ENCODE measurements at regions of chr6 and their contacts with region 1.

Region 1: GRCh38 chr6:167219967-167220512 is 62.3 kb upstream of the GPR31 start:
- DNase-seq: peak; percentile 74

Region 2: GRCh38 chr6:167285077-167285770 is 65.2 kb after region 1 on chr6:
- intact Hi-C with region 1: loop called (anchors 10 kb)
- DNase-seq: no peak

Region 3: GRCh38 chr6:167760979-167761793 is 541.1 kb after region 1 on chr6:
- intact Hi-C with region 1: no loop called
- DNase-seq: no peak